ENCODE measurements at regions of chr1 and their contacts with region 1.

Region 1: DNA sequence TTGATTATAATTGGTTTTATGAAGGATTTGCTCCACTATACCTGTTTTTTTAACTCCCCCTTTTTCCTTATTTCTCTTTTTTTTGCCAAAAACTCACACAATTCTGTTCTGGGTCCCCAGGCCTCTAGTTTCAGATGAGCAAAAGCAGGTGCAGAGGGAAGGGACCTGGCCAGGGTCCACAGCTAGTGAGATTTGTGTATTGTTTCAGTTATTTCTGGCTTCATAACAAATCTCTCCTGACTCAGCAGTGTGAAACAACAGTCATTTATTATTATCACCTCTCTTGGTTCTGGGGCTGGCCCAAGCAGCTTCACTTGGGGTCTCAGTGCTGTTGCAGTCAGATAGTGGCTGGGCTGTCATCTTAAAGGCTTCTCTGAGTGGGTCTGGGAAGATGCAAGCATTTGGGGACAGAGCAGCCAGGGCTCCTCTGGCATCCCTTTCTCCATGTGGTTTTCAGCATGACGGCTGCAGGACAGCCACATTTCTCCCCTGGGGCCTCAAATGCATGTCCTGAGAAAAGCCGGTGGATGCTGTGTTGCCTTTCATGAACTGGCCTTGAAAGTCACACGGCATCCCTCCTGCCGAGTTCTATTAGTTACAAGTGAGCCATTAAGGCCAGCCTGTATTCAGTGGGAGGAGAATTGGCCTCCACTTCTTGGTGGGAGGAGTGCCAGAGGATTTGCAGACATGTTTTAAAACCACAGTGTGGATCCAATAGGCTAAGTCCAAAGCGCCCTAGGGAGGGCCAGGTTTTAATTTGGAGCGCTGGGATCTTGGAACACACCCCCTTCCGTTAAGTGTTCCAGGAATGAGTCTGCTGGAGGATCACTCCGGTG is 137.1 kb downstream of the CAMTA1 start:
- DNase-seq: no peak
- ATAC-seq: no peak
- H3K4me3 ChIP-seq: no peak overlapping the region
- H3K4me3 Mint-ChIP-seq: no peak overlapping the region
- H3K27ac ChIP-seq: no peak overlapping the region
- H3K27ac Mint-ChIP-seq: no peak overlapping the region
- H3K4me1 ChIP-seq: no peaks in the 10 kb centered on the region
- H3K4me1 Mint-ChIP-seq: no peaks in the 10 kb centered on the region
- H3K27me3 ChIP-seq: peaks cover 0 to 33% of the 10 kb centered on the region in 2 experiments
- H3K27me3 Mint-ChIP-seq: peaks cover 15 to 20% of the 10 kb centered on the region in 2 donors

Region 2: DNA sequence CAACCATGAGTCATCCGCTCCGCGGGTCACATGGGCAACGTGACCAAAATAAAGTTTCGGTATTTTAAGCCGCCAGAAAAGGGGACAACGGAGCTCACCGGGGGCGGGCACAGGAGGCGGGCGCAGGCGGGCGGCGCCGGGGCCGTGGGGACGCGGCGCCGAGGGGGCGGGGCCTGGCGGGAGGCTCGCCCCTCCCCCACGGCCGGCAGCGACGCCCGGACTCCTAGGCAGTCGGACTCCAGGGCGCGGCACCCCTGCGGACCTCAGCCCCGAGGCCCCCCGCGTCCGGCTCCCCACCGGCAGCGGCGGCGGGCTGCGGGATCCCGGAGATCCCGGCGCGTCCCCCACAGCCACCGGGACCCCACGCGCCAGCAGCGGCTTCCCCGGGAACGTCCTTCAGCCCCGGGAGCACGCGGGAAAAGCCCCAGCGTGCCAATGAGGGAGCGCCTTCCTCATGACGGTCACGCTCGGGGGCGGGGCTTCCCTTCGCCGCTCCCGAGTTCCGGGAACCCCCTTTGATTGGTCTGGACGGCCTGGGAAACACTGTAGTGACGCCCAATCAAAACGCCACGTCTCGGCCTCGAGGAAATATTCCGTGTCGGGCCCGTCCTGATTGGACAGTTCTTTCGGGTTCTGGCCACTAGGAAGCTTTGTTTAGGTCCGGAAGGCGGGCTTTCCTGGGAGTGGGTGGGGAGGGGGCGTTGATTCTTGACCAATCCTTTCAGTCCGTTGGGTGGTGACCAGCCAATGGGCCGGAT is 137.6 kb before region 1 on chr1:
- CTCF ChIA-PET with region 1: no interaction called
- POLR2A ChIA-PET with region 1: interaction called in 1 of 2 experiments, 11 read pairs
- DNase-seq: peak; percentile 73 to 100 (median 99)
- ATAC-seq: peak; percentile 79 to 82 (median 81)
- H3K4me3 ChIP-seq: peak overlapping the region; percentile 66 to 85
- H3K4me3 Mint-ChIP-seq: peak overlapping the region; percentile 83 to 90 (median 84)
- H3K27ac ChIP-seq: peak overlapping the region; percentile 83
- H3K27ac Mint-ChIP-seq: peak overlapping the region; percentile 82 to 87
- H3K4me1 ChIP-seq: peaks cover 15 to 22% of the 10 kb centered on the region in 2 experiments
- H3K4me1 Mint-ChIP-seq: peaks cover 39 to 43% (median 41%) of the 10 kb centered on the region in 3 donors
- H3K27me3 ChIP-seq: no peaks in the 10 kb centered on the region
- H3K27me3 Mint-ChIP-seq: no peaks in the 10 kb centered on the region

Region 3: GRCh38 chr1:6859415-6860343 is 62.6 kb before region 1 on chr1:
- CTCF ChIA-PET with region 1: no interaction called
- POLR2A ChIA-PET with region 1: no interaction called
- DNase-seq: no peak
- ATAC-seq: no peak
- H3K4me3 ChIP-seq: no peak overlapping the region
- H3K4me3 Mint-ChIP-seq: no peak overlapping the region
- H3K27ac ChIP-seq: no peak overlapping the region
- H3K27ac Mint-ChIP-seq: no peak overlapping the region
- H3K4me1 ChIP-seq: no peaks in the 10 kb centered on the region
- H3K4me1 Mint-ChIP-seq: peaks cover 23 to 31% (median 29%) of the 10 kb centered on the region in 3 donors
- H3K27me3 ChIP-seq: no peaks in the 10 kb centered on the region
- H3K27me3 Mint-ChIP-seq: no peaks in the 10 kb centered on the region

Region 4: DNA sequence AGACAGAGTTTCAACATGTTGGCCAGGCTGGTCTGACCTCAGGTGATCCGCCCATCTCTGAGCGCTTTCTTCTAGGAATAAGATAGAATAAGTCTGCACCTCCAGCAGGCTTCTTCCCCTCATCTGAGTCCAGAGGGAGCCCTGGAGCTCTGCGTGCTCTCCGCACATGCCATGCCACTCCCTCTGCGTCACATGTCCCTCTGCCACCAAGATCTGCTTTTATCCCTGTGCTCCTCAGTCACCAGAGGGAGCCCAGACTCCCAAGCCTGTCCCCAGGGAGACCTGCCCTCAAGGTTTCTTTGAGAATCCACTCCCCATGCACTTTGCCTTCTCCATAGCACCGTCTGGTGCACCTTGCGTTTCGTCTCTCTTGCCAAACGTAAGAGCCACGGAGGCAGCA is 76.0 kb after region 1 on chr1:
- CTCF ChIA-PET with region 1: no interaction called
- POLR2A ChIA-PET with region 1: no interaction called
- DNase-seq: no peak
- ATAC-seq: no peak
- H3K4me3 ChIP-seq: no peak overlapping the region
- H3K4me3 Mint-ChIP-seq: no peak overlapping the region
- H3K27ac ChIP-seq: no peak overlapping the region
- H3K27ac Mint-ChIP-seq: no peak overlapping the region
- H3K4me1 ChIP-seq: peaks cover 0 to 5% of the 10 kb centered on the region in 2 experiments
- H3K4me1 Mint-ChIP-seq: peaks cover 0 to 3% (median 0%) of the 10 kb centered on the region in 3 donors
- H3K27me3 ChIP-seq: peaks cover 0 to 11% of the 10 kb centered on the region in 2 experiments
- H3K27me3 Mint-ChIP-seq: peaks cover 8 to 15% of the 10 kb centered on the region in 2 donors